ENCODE measurements at regions of chr16 and their contacts with region 1.

Region 1: DNA sequence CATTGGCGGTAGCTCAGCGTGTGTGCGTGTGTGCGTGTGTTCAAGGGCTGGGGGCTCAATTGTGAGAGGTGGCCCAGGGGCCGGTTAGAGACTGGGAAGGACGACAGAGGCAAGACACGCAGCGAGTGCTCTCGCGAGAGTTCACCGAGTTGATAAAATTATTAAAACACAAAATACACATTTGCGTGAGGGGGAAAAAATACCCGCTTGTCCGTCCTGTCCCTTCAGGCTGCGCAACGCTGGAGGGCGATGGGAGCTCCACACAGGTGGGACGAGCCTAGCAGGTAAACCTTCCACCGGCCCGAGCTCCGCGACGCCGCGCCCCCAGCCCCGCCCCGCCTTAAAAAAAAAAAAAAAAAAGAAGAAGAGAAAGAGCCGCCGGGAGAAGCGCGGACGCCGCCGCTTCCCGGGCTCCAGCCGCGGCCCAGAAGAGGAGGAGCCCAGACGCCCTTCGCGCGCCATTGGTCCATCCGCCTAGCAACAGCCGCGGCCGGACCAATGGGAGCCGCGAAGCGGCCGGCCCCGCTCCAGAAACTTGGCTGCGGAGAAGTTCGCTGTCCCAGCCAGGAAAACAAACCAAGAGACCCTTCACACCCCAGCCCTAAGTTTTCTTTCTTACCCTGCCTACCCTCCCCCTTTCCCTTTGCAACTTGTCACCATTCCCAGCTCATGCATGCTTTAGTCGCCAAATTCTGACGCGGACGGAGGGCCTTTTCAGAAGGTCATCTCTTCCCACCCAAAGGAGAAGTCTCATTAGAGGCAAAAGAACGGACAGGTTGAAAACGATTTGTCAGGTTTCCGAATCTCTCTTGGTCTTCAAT is 169.9 kb upstream of the MAF start:
- DNase-seq: peak; percentile 63
- ATAC-seq: peak; percentile 98
- H3K4me3 ChIP-seq: peak overlapping the region; percentile 58 to 71 (median 62)
- H3K27ac ChIP-seq: no peak overlapping the region
- H3K4me1 ChIP-seq: peaks cover 33% of the 10 kb centered on the region
- H3K27me3 ChIP-seq: peaks cover 0 to 24% of the 10 kb centered on the region in 2 experiments; a peak in 2 of 5 replicates
- CTCF ChIP-seq: no peak
- EP300 ChIP-seq: peak in 1 of 2 experiments; percentile 66; a peak in 2 of 4 replicates
- POLR2A ChIP-seq: no peak
- RAD21 ChIP-seq: no peak

Region 2: DNA sequence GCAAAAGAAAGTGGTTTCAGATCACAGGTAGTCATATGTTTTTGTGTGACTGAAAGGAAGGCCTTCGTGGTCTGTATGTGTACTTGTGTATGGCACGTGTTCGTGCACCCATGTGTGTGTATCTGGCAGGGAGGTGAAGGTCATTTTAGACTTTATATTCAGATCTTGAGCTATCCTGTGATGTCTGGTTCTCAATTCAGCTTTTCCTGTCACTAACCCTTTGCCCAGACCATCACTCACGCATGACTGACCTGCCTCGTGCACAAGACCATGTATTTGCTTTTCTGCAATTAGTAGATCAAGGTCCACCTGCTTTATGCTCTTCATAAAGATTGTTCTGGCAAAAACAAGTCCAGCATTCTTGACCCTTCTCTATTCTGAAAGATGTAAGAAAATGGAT is 30.2 kb before region 1 on chr16:
- CTCF ChIA-PET with region 1: no interaction called
- POLR2A ChIA-PET with region 1: no interaction called
- in situ Hi-C with region 1: no loop called
- intact Hi-C with region 1: loop called (anchors 1 kb)
- DNase-seq: peak; percentile 56
- ATAC-seq: peak; percentile 78
- H3K4me3 ChIP-seq: no peak overlapping the region
- H3K27ac ChIP-seq: no peak overlapping the region
- H3K4me1 ChIP-seq: peaks cover 13% of the 10 kb centered on the region
- H3K27me3 ChIP-seq: no peaks in the 10 kb centered on the region
- CTCF ChIP-seq: no peak
- EP300 ChIP-seq: peak in 1 of 2 experiments; percentile 55; a peak in 1 of 4 replicates
- POLR2A ChIP-seq: no peak
- RAD21 ChIP-seq: no peak

Region 3: GRCh38 chr16:80084685-80085084 is 314.2 kb after region 1 on chr16:
- CTCF ChIA-PET with region 1: interaction called, 7 read pairs
- POLR2A ChIA-PET with region 1: no interaction called
- in situ Hi-C with region 1: no loop called
- intact Hi-C with region 1: loop called (anchors 1 kb)
- DNase-seq: peak; percentile 41
- ATAC-seq: peak; percentile 99
- H3K4me3 ChIP-seq: no peak overlapping the region
- H3K27ac ChIP-seq: no peak overlapping the region
- H3K4me1 ChIP-seq: no peaks in the 10 kb centered on the region
- H3K27me3 ChIP-seq: no peaks in the 10 kb centered on the region
- CTCF ChIP-seq: peak; percentile 77
- EP300 ChIP-seq: no peak
- POLR2A ChIP-seq: no peak
- RAD21 ChIP-seq: peak; percentile 70

Region 4: GRCh38 chr16:80369138-80369958 is 598.9 kb after region 1 on chr16:
- CTCF ChIA-PET with region 1: no interaction called
- POLR2A ChIA-PET with region 1: no interaction called
- in situ Hi-C with region 1: no loop called
- intact Hi-C with region 1: loop called (anchors 1 kb)
- DNase-seq: peak; percentile 23
- ATAC-seq: peak; percentile 94
- H3K4me3 ChIP-seq: no peak overlapping the region
- H3K27ac ChIP-seq: no peak overlapping the region
- H3K4me1 ChIP-seq: no peaks in the 10 kb centered on the region
- H3K27me3 ChIP-seq: no peaks in the 10 kb centered on the region
- CTCF ChIP-seq: peak; percentile 83
- EP300 ChIP-seq: no peak
- POLR2A ChIP-seq: no peak
- RAD21 ChIP-seq: peak; percentile 70

Measured in HepG2 (cell line).